ENCODE measurements at regions of chr11 and their contacts with region 1.

Region 1: GRCh38 chr11:57761301-57762234 is at the start of gene CTNND1:
- DNase-seq: no peak
- H3K4me3 Mint-ChIP-seq: no peak within 1 kb of the TSS
- H3K27ac Mint-ChIP-seq: no peak within 1 kb of the TSS
- H3K4me1 Mint-ChIP-seq: peaks cover 7% of the 10 kb centered on the region
- H3K27me3 Mint-ChIP-seq: no peaks in the 10 kb centered on the region
- total RNA-seq, gene CTNND1: 3.5 to 4.4 TPM

Region 2: DNA sequence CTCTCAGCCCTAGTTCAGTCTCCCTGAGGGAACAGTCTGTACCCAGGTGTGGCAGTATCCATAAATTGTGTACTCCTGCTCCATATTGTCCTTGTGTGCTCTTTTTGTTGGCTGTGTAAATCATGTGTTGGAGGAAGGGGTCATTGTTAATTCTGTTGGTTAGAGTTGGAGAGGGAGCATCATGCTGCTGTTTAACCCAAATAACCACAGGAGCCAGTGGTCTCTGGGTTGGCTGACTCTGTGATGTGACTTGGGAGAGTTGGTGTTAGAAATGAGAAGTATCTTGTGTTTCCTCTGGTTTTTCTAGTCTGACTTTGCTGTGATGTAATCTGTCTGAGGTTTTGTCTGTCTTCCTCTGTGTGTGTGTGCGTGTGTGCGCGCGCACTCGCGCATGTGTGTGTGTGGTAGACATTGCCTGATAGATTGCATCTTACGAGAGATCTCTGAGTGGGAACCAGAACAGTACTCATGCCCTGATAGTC is 30.5 kb after region 1 on chr11:
- CTCF ChIA-PET with region 1: interaction called, 3 read pairs
- POLR2A ChIA-PET with region 1: interaction called, 3 read pairs
- intact Hi-C with region 1: loop called (anchors 1 kb)
- DNase-seq: peak; percentile 90
- H3K4me3 Mint-ChIP-seq: peak overlapping the region; percentile 55
- H3K27ac Mint-ChIP-seq: peak overlapping the region; percentile 86
- H3K4me1 Mint-ChIP-seq: peaks cover 34% of the 10 kb centered on the region
- H3K27me3 Mint-ChIP-seq: peaks cover 1% of the 10 kb centered on the region

Region 3: GRCh38 chr11:57978686-57979531 is 217.3 kb after region 1 on chr11:
- CTCF ChIA-PET with region 1: no interaction called
- POLR2A ChIA-PET with region 1: no interaction called
- intact Hi-C with region 1: no loop called
- DNase-seq: no peak
- H3K4me3 Mint-ChIP-seq: no peak overlapping the region
- H3K27ac Mint-ChIP-seq: no peak overlapping the region
- H3K4me1 Mint-ChIP-seq: no peaks in the 10 kb centered on the region
- H3K27me3 Mint-ChIP-seq: peaks cover 7% of the 10 kb centered on the region